ENCODE measurements at regions of chr10 and their contacts with region 1.

Region 1: GRCh38 chr10:22420787-22421517 is 75.7 kb downstream of the SPAG6 start:
- DNase-seq: peak; percentile 37
- ATAC-seq: peak; percentile 54
- H3K4me3 ChIP-seq: no peak overlapping the region
- H3K4me3 Mint-ChIP-seq: no peak overlapping the region
- H3K27ac ChIP-seq: no peak overlapping the region
- H3K27ac Mint-ChIP-seq: no peak overlapping the region
- H3K4me1 ChIP-seq: peaks cover 4 to 5% of the 10 kb centered on the region in 2 donors
- H3K4me1 Mint-ChIP-seq: peaks cover 5% of the 10 kb centered on the region
- H3K27me3 ChIP-seq: peaks cover 0 to 2% (median 0%) of the 10 kb centered on the region in 4 experiments
- H3K27me3 Mint-ChIP-seq: no peaks in the 10 kb centered on the region
- CTCF ChIP-seq: peak; percentile 32

Region 2: DNA sequence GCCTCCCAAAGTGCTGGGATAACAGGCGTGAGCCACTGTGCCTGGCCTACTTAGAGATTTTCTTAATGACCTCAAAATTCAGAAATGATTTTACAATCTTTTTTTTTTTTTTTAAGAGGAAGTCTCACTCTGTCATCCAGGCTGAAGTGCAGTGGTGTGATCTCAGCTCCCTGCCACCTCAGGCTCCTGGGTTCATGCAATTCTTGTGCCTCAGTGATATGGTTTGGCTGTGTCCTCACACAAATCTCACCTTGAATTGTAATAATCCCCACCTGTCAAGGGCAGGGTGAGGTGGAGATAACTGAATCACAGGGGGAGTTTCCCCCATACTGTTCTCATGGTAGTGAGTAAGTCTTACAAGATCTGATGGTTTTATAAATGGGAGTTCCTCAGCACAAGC is 577.3 kb before region 1 on chr10:
- CTCF ChIA-PET with region 1: no interaction called
- POLR2A ChIA-PET with region 1: no interaction called
- intact Hi-C with region 1: no loop called
- DNase-seq: no peak
- ATAC-seq: no peak
- H3K4me3 ChIP-seq: no peak overlapping the region
- H3K4me3 Mint-ChIP-seq: no peak overlapping the region
- H3K27ac ChIP-seq: no peak overlapping the region
- H3K27ac Mint-ChIP-seq: no peak overlapping the region
- H3K4me1 ChIP-seq: no peaks in the 10 kb centered on the region
- H3K4me1 Mint-ChIP-seq: no peaks in the 10 kb centered on the region
- H3K27me3 ChIP-seq: no peaks in the 10 kb centered on the region
- H3K27me3 Mint-ChIP-seq: no peaks in the 10 kb centered on the region
- CTCF ChIP-seq: no peak

Region 3: GRCh38 chr10:22369434-22370072 is 51.4 kb before region 1 on chr10:
- CTCF ChIA-PET with region 1: no interaction called
- POLR2A ChIA-PET with region 1: no interaction called
- intact Hi-C with region 1: loop called (anchors 5 kb)
- DNase-seq: no peak
- ATAC-seq: peak; percentile 28
- H3K4me3 ChIP-seq: no peak overlapping the region
- H3K4me3 Mint-ChIP-seq: no peak overlapping the region
- H3K27ac ChIP-seq: no peak overlapping the region
- H3K27ac Mint-ChIP-seq: no peak overlapping the region
- H3K4me1 ChIP-seq: peaks cover 7 to 8% of the 10 kb centered on the region in 2 donors
- H3K4me1 Mint-ChIP-seq: peaks cover 17% of the 10 kb centered on the region
- H3K27me3 ChIP-seq: no peaks in the 10 kb centered on the region
- H3K27me3 Mint-ChIP-seq: no peaks in the 10 kb centered on the region
- CTCF ChIP-seq: no peak